Psoas muscle (tissue), 8 donors: ENCODE measurements at regions of chr18 and their contacts with region 1.

Region 1: GRCh38 chr18:499551-500408 is 721 bp downstream of the COLEC12 start:
- DNase-seq: peak in 1 of 2 donors; percentile 33
- ATAC-seq: peak in 1 of 4 donors; percentile 50
- H3K4me3 ChIP-seq: peak overlapping the region; percentile 58
- H3K27ac ChIP-seq: no peak overlapping the region
- H3K4me1 ChIP-seq: no peaks in the 10 kb centered on the region
- H3K27me3 ChIP-seq: peaks cover 0 to 45% (median 9%) of the 10 kb centered on the region in 3 donors
- CTCF ChIP-seq: no peak

Region 2: DNA sequence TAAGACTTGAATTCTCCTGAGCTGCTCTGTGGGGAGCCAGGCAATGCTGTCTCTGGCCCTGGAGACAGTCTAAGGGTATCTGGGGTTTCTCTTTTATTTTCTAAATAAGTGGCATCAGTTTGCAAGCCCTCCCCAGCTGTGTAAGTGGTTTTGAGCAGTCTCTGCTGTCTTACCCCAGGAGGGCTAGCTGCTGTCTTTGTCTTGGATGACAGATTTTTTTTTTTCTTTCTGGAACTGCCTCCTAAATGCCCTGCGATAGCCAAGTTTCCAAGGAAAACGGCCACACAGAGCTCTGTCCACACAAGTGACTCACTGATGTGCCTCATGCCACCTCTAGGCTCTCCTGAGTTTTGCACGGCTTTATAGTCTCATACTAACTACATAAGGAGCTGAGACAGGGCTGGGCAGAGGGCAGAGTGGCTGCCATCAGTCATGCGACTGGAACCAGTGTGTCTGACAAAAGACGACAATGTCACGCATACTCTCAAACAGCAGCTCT is 194.7 kb before region 1 on chr18:
- intact Hi-C with region 1: loop called in 1 of 2 experiments (anchors 10 kb)
- DNase-seq: no peak
- ATAC-seq: no peak
- H3K4me3 ChIP-seq: no peak overlapping the region
- H3K27ac ChIP-seq: no peak overlapping the region
- H3K4me1 ChIP-seq: no peaks in the 10 kb centered on the region
- H3K27me3 ChIP-seq: peaks cover 0 to 1% (median 0%) of the 10 kb centered on the region in 3 donors
- CTCF ChIP-seq: no peak

Region 3: DNA sequence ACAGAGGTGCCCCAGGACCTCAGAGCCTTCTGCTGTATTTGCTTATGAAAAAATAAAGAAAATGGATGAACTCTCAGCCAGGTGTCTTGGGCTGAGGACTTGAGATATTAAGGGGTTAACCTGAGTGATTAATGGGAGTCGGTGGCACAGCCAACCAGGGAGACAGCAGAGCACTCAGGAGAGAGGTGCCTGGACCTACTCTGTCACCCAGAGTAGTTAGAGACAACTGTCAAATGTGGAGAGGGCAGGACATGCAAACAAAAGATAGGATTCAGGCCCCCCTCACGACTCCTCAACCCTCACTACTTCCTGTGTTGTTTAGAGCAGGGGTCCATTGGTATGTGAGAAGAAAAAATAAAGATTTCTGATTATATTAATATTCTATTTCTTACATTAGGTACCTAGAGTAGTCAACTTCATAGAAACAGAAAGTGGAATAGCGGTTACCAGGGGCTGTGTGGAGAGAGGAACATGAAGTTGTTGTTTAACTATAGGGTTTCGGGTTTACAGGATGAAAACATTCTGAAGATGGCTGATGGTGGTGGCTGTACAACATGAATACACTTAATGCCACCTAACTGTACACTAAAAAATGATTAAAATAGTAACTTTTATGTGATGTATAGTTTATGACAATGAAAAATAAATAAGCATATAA is 51.8 kb after region 1 on chr18:
- intact Hi-C with region 1: loop called in 1 of 2 experiments (anchors 10 kb)
- DNase-seq: no peak
- ATAC-seq: no peak
- H3K4me3 ChIP-seq: no peak overlapping the region
- H3K27ac ChIP-seq: no peak overlapping the region
- H3K4me1 ChIP-seq: no peaks in the 10 kb centered on the region
- H3K27me3 ChIP-seq: no peaks in the 10 kb centered on the region
- CTCF ChIP-seq: no peak